ENCODE measurements at regions of chr3 and their contacts with region 1.

Region 1: DNA sequence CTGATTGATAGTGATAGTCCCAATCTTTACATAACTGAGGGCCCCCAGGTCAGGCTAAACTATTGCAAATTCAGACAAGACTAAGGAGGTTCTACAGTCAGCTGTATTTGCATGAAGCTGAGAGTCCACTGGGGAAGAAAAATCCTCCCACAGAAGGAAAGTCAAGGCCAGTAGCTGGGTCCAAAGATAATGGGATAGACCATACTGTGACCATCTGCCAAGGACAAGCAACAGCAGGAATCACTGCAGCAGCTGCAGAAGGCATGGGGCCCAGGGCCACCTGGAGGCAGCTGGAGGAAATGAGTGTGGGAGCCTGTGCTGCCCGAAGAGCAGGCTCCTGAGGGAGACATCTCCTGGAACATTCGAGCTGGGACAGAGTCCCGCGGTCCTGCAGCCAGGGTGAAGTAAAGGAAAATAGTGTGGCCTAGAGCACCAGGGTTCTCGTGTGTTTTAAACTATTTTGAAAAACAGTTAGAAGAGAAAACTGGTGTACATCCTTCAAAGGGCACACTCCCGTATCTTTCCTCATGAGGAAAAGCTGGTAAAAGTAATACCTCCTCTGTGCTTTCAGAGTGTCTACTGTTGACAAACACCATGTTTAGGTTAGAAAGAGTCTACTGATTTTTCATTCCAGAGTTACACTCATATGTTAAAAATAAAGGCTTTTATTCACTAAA is 13.2 kb upstream of the TMEM212 start:
- DNase-seq: peak; percentile 81 to 83 (median 83)
- ATAC-seq: peak; percentile 98
- H3K4me3 ChIP-seq: no peak overlapping the region
- H3K4me1 ChIP-seq: no peaks in the 10 kb centered on the region
- CTCF ChIP-seq: peak; percentile 54

Region 2: DNA sequence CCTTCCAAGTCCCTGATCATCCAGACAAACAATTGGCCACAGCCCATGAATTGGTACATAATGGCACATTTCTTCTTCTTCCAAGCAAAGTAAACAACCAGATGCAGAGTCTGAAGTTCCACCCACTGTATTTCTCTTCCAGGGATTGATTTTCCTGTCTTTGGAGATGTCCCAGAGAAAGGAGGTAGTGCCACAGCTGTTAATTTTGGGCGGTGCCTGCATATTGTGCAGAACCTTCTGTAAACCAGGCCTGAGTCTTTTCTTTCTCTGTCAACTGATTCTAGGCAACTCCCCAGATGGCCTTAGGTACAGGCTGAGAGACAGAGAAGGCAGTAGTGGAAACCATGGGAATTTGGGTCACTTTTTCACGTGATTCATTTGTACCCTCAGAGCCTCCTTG is 296.3 kb before region 1 on chr3:
- intact Hi-C with region 1: no loop called
- DNase-seq: no peak
- ATAC-seq: no peak
- H3K4me3 ChIP-seq: no peak overlapping the region
- H3K4me1 ChIP-seq: no peaks in the 10 kb centered on the region
- CTCF ChIP-seq: no peak

Region 3: GRCh38 chr3:171646357-171647133 is 183.4 kb before region 1 on chr3:
- intact Hi-C with region 1: loop called in 1 of 2 experiments (anchors 10 kb)
- DNase-seq: no peak
- ATAC-seq: peak; percentile 70
- H3K4me3 ChIP-seq: no peak overlapping the region
- H3K4me1 ChIP-seq: no peaks in the 10 kb centered on the region
- CTCF ChIP-seq: no peak

Region 4: DNA sequence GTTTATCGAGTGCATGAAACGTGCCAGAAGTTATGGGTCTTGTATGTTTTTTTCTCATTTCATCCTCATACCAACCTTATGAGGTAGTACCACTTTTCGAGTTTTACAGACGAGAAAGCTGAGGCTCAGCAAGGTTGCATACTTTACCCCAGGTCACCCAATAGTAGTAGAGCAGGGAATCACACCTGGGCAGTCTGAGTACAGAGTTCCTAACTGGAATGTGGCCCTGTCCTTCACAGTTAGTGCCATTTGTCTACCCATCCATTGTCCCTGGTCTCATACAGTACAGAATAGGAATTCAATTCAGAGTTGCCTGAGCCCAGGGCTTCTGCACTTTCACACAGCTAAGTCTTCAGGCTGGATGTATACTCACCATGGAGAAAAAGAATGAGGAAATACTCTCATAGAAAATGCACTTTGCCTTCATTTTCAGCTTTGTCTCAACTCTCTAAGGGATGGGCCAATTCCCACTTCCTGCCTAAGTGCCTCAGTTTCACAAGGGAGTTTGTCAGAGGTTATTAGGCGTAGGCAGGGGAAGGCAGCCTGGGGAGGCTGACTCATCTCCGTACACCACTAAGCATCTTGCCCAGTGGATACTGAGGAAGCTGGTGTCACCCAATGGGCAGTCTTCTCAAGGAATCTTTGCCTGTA is 106.3 kb after region 1 on chr3:
- intact Hi-C with region 1: no loop called
- DNase-seq: no peak
- ATAC-seq: peak; percentile 90
- H3K4me3 ChIP-seq: no peak overlapping the region
- H3K4me1 ChIP-seq: no peaks in the 10 kb centered on the region
- CTCF ChIP-seq: no peak